Right ventricle myocardium inferior (tissue), 1 donor: ENCODE measurements at regions of chr5 and their contacts with region 1.

Region 1: DNA sequence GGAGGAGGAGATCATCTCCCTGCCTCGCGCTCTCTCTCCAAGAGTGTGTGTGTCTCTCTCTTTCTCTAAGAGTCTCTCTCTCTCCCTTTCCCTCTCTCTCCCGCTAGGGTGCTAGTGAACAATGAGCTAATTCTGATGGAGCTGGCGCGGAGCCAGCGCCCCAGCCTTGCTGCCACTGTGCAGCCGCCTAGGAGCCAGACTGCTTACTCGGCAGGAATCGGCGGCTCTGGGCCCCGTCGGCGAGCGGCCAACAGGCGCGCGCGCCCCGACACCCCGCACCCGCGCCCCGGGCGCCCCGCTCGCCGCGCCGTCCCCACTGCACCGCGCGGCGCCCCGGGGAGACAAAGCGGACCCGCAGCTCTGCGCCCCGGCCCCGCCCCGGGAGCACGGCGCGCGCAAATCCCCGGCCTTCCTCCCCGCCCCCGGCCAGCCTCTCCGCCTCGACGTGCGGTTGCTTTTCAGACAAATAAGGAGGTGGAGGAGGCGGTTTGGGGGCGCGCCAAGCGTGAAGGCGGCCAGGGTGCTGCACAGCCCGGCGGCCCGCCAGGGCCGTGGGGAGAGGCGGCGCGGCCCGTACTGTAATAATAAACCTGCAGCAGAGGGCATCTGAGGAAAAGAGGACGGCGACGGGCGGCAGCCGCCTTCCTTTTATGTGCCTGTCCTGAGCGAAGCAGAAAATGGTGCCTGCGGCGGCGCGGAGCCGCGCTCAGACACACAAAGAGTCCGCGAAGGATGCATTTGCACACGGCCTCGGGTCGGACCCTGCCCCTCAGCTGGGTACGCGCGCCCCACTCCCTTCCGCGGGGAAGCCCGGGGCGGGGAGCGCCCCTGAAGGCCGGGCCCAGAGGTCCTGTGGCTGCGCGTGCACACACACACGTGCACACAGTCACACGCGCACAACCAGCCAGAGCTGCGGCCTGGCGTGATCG is 625 bp upstream of the NREP start:
- DNase-seq: peak; percentile 96
- ATAC-seq: peak; percentile 92

Region 2: DNA sequence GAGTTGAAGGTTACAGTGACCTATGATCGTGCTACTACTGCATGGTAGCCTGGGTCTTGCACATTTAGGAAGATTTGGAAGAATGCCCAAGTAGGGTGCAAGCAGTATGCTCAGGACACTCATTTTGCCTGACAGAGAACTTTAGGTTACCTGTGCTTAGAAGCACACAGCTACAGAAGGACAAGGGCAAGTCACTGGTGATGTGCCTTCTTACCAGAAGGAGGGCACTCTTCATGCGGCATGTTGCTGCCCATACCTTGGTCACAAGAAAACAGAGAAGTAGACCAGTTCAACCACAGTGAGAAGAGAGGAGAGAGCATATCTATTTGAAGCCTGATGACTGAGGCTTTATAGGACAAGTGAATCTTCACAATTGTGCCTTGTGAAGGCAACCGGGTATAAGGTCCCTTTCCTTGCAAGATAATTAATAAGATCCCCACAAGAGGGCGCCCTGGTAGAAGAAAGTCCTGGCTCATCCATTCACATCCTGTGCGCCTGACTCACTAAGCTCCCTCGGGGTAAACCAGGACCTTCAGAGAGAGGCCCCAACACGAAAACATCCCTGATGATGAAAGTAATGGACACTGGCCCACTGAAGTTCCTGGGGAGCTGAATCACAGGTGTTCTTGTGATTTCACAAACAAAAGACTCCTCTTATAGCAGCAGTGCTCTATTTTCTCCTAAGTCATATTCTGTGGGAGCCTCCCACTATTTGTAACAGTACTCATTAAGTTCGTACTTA is 207.2 kb before region 1 on chr5:
- intact Hi-C with region 1: loop called (anchors 1 kb)
- DNase-seq: no peak
- ATAC-seq: peak; percentile 91

Region 3: DNA sequence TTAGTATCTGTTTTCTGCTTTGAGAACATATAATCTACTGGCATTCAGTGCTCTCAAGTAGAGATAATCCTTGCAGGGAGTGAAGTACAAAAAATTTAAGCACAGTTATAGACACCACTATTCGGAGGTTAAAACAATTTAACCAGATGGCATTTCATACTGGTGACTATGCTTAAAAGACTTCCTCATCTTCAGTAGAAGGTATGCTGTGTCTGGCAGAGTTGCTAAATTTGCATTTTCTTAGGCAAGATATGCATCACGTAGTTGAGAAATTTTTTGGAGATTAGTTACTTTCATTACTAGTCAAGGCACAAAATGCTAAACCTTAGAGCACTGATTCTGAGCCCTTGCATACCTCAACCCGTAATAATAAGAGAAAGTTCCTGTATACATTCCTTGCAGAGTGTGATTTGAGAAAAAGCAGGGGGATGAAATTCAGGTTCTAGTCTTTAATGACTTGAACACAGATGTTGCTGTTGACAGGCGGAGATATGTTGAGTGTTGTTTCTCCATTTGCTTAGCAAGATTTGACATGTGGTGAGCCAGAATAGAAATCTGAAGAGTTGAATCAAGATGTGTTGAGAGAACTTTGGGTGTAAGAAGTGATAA is 174.5 kb before region 1 on chr5:
- intact Hi-C with region 1: loop called (anchors 2 kb)
- DNase-seq: no peak
- ATAC-seq: peak; percentile 77

Region 4: DNA sequence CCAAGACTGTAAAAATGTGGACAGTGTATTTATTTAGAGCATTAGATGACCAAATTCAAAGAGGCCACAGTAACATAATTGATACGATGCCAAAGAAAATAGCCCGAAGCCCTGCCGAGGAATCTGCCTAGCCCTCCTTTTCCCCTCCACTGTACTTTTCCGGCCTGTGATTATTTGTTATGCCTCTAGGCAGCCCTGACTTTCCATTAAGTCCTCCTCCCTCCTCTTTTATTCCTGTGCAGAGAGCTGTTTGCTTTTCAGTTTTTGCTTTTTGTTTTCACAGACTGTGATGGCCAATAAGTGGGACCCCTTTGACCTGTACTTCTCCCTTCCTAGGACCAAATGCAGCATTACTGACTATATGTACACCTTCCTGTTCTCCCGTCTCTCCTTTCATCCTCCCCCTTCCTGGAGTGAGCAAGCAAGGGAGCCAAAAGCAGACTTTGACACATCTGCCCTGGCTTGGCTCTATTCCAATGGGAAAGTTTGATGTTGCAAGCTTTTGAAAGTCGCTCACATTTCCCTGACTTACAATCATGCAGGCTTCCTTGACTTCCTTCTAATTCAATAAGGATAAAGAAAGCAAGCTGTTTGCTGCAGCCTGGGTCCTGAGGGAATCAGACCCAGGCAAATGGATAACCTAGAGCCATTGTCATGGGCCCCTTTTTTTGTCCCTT is 76.7 kb before region 1 on chr5:
- intact Hi-C with region 1: loop called (anchors 5 kb)
- DNase-seq: no peak
- ATAC-seq: peak; percentile 86